ENCODE measurements at regions of chr15 and their contacts with region 1.

Region 1: DNA sequence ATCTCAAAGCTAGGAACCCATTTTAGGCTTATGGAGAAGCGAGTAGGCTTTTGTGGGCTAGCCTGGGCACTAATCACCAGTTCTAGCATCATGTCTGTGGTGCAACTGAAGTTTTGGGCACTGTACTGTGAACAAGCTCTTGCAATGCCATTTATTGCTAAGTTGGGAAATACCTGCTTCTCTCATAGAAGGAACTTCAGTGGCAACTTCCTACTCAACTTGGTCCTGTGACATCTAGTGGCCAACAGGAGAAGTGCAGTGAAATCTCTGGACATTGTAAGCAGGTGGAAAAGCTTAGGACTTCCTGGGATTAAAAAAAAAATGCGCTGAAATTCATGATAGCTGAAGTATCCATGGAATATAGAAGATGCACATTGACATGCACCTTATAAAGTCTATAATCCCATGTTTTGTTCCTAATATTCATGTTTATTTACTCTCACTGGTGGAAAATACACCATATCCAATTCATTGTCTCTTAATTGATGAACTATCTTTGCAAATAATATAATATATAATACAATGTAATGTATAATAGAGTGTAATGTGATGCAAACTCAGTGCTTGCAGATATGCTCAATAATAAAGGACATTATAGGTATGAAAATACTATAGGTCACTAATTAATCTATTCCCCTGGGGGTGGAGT is 6.5 kb upstream of the ALDH1A3 start:
- H3K4me3 ChIP-seq: no peak overlapping the region
- H3K27ac ChIP-seq: no peak overlapping the region
- H3K4me1 ChIP-seq: no peaks in the 10 kb centered on the region
- CTCF ChIP-seq: 0 out of 2 replicates have a peak, but pooled peaks have one; percentile 22

Region 2: DNA sequence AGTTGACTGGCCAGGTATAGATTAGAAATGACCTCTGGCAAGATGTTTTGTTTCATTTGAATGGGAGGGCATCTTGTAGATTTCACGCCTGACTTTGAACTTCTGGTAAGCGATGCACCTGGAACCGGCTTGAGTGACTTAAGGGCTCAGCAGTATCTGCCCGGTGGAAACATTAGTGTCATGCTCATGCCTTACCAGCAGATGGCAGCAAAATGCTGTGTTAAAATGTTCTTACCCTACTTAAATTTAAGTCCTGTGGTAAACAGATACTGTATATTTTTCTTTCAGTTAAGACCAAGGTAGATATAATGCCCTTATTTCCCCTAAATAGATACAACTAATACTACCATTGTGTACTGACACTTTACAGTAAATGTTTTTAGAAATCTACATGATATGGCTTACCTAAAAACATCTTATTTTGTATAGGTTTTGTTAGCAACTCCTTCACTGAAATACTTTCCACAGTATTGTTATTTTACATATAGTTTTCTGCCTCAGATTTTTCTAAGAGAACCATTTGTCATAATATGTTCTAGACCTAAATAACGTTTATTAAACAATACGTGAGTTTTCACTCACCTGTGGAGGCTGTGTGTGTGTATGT is 245.3 kb before region 1 on chr15:
- CTCF ChIA-PET with region 1: interaction called, 14 read pairs
- POLR2A ChIA-PET with region 1: no interaction called
- H3K4me3 ChIP-seq: no peak overlapping the region
- H3K27ac ChIP-seq: no peak overlapping the region
- H3K4me1 ChIP-seq: no peaks in the 10 kb centered on the region
- CTCF ChIP-seq: no peak

Region 3: DNA sequence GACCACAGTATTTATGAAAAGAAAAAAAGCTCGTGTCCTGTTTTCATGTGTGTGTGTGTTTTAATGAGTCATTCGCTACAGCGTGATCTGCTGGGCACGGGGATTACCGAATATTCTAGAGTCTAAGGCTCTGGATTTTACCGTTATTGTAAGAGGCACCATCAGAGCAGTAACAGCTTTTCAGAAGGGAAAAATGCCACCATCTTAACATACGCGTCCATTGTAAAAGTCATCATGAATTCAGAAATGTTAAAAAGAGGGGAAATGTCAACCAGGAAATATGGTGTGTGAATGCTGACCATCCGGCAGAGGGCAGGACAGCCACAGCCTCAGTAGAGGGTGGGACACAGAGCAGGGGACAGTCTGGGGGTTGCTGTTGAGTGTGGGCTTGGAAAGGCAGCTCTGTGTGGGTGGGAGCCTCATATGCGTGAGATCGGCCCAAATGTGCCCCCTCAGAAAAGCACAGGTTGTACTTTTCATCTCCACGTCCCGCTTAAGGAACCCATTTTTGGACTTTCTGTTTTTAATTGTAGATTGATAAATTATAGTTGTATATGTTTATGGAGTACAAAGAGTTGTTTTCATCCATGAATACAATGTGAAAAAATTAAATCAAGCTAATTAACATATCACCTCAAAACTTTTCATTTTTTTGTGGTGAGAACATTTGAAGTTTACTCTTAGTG is 201.2 kb before region 1 on chr15:
- CTCF ChIA-PET with region 1: interaction called, 13 read pairs
- POLR2A ChIA-PET with region 1: no interaction called
- H3K4me3 ChIP-seq: no peak overlapping the region
- H3K27ac ChIP-seq: no peak overlapping the region
- H3K4me1 ChIP-seq: no peaks in the 10 kb centered on the region
- CTCF ChIP-seq: no peak

Region 4: GRCh38 chr15:100703032-100703578 is 170.0 kb before region 1 on chr15:
- CTCF ChIA-PET with region 1: no interaction called
- POLR2A ChIA-PET with region 1: no interaction called
- H3K4me3 ChIP-seq: no peak overlapping the region
- H3K27ac ChIP-seq: no peak overlapping the region
- H3K4me1 ChIP-seq: no peaks in the 10 kb centered on the region
- CTCF ChIP-seq: no peak

Region 5: DNA sequence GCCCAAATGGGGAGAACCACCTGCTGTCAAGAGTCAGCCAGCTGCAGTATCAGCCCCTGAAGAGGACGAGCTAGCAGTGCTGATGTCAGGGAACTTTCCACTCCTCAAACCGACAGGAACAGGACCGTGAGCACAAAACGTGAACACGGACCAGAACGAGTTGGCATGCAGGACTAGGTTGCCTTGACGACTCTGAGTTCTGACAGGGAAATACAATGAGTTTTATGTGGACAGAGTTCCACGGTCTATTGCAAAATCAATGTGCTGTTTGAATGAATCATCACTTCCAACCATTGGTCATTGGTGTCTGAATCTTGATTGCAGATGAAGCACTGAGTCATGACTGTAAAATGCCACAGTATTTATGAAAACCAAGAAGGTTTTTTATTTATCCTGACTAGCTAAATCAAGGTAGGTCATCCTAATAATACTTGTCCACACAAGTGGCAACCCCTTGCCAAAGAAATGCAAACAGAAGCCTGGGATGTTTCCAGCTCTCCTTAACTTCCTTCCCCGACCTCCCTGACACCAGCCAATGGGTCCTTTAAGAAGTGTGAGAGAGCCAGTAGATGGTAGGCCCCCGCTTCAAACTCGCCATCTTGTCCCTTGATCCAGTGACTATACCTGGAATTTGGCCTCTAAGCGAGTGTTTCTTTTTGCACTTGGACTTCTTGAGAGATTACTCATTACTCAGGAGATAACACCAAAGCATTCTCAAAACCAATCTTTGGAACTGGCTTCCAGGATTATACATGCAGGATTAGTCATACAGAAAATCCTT is 151.2 kb before region 1 on chr15:
- CTCF ChIA-PET with region 1: no interaction called
- POLR2A ChIA-PET with region 1: no interaction called
- H3K4me3 ChIP-seq: no peak overlapping the region
- H3K27ac ChIP-seq: no peak overlapping the region
- H3K4me1 ChIP-seq: peaks cover 7% of the 10 kb centered on the region; the same call in 1 of the 2 replicates
- CTCF ChIP-seq: no peak

Region 6: GRCh38 chr15:100833417-100834389 is 39.5 kb before region 1 on chr15:
- CTCF ChIA-PET with region 1: no interaction called
- POLR2A ChIA-PET with region 1: no interaction called
- H3K4me3 ChIP-seq: no peak overlapping the region
- H3K27ac ChIP-seq: no peak overlapping the region
- H3K4me1 ChIP-seq: no peaks in the 10 kb centered on the region
- CTCF ChIP-seq: no peak

Region 7: DNA sequence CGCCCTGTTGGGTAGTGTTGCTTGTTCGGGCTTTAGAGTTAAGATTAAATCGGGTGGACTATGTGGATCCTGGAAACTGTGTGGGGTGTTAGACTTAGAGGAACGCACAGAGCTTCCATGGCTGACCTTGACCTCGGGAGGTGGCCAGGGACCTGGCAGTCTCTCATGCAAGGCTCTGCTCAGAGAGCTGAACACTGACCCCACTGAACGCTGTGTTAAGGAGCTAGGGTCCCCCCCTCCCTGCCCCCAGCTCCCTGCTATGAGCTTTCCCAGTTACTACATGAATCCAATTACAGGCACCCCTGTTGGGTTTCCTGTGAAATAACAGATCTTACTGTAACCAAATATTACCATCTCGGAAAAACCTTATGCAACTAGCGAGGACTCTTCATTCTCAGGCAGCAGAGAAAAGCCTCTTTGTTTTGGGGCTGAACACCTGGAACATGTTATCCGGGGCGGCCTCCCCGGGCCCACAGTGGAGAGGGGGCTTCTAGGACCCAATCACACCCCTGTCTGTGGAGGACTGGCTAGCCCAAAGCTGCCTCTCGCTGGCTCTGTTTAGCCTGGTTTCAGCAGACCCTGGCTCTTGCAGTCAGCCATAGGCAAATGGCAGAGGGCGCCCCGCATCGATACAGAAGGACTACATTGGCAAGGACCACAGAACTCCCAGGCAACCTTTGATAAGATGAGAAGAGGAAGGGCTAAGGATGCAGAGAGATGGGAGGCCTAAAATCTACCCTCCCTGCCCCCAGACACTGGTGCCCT is 19.3 kb before region 1 on chr15:
- CTCF ChIA-PET with region 1: interaction called, 19 read pairs
- POLR2A ChIA-PET with region 1: no interaction called
- H3K4me3 ChIP-seq: no peak overlapping the region
- H3K27ac ChIP-seq: no peak overlapping the region
- H3K4me1 ChIP-seq: no peaks in the 10 kb centered on the region
- CTCF ChIP-seq: no peak

Measured in HEK293 (cell line).